ENCODE measurements at regions of chr7 and their contacts with region 1.

Region 1: GRCh38 chr7:27774717-27775328 is 34.9 kb downstream of the TAX1BP1 start:
- DNase-seq: peak; percentile 9
- H3K4me3 ChIP-seq: no peak overlapping the region
- H3K27ac ChIP-seq: no peak overlapping the region
- H3K4me1 ChIP-seq: peaks cover 0 to 4% of the 10 kb centered on the region in 2 experiments; a peak in 1 of 4 replicates
- H3K27me3 ChIP-seq: no peaks in the 10 kb centered on the region
- CTCF ChIP-seq: peak; percentile 83
- EP300 ChIP-seq: no peak
- RAD21 ChIP-seq: peak; percentile 70

Region 2: DNA sequence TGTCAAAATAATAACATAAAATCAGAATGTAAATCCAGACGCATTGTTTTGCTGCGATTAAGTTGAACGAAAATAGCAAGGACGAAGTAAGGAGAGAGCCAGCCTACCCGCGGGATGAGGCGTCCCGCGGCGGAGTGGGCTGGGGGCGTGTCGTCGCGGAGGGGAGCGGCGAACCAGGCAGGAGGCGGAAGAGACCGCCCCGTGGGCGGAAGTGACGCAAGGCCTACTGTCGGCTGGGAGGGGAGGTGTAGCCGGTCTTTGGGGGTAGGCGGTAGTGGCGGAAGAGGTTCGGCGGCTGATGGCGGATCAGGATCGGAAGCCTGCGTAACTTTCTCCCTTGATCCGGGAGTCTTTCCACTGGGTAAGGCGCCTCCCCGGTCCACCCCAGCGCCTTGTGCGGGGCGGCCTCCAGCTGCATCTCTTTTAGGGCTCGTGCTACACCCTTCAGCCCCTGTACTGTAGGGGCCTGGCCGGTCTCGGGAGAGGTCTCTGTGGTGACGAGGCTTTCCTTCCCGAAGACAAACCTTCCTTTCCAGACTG is 34.8 kb before region 1 on chr7 and contains the start of gene TAX1BP1:
- CTCF ChIA-PET with region 1: interaction called, 35 read pairs
- POLR2A ChIA-PET with region 1: no interaction called
- DNase-seq: peak; percentile 99
- H3K4me3 ChIP-seq: peak within 1 kb of the TSS; percentile 83 to 99
- H3K27ac ChIP-seq: peak within 1 kb of the TSS; percentile 94 to 97
- H3K4me1 ChIP-seq: peaks cover 13 to 14% of the 10 kb centered on the region in 2 experiments; a peak in 2 of 4 replicates
- H3K27me3 ChIP-seq: no peaks in the 10 kb centered on the region
- CTCF ChIP-seq: no peak
- EP300 ChIP-seq: no peak; a peak in 1 of 4 replicates
- RAD21 ChIP-seq: no peak
- polyA plus RNA-seq, gene TAX1BP1: 70.3 and 108 TPM in 2 replicates

Region 3: DNA sequence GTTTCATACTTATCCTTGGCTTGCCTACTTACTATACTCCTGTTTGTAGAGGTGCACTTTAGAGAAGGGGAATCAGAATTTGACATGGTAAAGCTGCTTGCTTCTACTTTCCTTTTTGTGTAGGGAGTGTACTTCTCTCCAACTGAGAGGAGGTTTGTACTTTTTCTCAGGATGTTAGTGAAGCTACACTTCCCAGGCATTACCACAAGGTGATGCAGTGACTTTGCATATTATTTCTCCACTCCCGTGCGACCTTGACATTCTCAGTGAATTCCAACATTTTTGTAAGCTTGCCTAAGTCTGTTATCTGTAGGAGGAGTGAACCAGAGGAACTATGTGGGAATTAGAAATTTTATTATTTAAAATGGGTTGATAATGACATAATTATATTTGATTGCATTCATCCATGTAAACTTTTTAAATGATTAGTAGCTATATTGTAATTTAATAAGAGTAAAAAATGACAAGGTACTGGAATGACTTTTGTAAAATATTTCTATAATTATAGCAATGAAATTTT is 29.7 kb before region 1 on chr7:
- CTCF ChIA-PET with region 1: interaction called, 35 read pairs
- POLR2A ChIA-PET with region 1: no interaction called
- DNase-seq: peak; percentile 58
- H3K4me3 ChIP-seq: no peak overlapping the region; a peak in 1 of 4 replicates
- H3K27ac ChIP-seq: peak overlapping the region; percentile 29 to 65
- H3K4me1 ChIP-seq: peaks cover 15 to 29% of the 10 kb centered on the region in 2 experiments; a peak in 3 of 4 replicates
- H3K27me3 ChIP-seq: no peaks in the 10 kb centered on the region
- CTCF ChIP-seq: peak; percentile 89
- EP300 ChIP-seq: no peak
- RAD21 ChIP-seq: peak; percentile 87

Measured in SK-N-SH (cell line).